Breast epithelium (tissue), 4 donors: ENCODE measurements at regions of chr12 and their contacts with region 1.

Region 1: GRCh38 chr12:94459728-94460615 is at the start of gene CEP83:
- DNase-seq: peak; percentile 90 to 95
- H3K4me3 ChIP-seq: peak within 1 kb of the TSS; percentile 77 to 86 (median 85)
- H3K27ac ChIP-seq: peak within 1 kb of the TSS; percentile 89 to 96
- H3K4me1 ChIP-seq: no peaks in the 10 kb centered on the region
- H3K27me3 ChIP-seq: no peaks in the 10 kb centered on the region
- CTCF ChIP-seq: no peak
- POLR2A ChIP-seq: peak; percentile 47
- total RNA-seq, gene CEP83: 13.3 to 30.0 (median 23.3) TPM

Region 2: DNA sequence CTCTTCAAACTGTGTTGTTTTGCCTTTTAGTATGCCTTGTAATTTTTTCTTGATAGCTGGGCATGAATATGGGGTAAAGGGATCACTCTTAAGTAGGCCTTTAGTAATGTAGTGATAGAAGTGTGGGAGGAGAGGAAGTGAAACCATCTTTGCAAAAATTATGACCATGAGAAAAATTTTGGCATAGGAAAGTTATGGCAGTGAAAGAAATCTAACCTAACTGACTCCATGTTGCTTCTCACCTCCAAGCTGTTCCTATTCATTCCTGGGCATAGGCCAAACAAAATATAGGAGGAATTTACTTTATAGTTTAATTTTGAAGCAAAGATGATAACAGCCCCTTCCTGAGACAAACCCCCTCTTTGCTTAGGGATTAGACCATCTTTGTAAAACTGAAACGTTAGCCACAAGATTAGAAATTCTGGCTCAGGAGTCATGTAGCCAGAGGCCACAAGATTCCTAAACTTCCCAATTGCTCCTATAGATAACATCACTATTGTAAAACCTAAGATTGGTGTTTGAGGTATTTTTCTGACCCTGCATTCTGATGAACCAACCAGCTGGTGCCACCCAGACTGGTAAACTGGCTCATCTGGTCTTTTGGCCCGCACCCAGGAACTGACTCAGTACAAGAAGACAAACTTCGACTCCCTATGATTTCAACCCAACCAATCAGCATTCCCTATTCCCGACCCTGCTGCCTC is 737.0 kb before region 1 on chr12:
- intact Hi-C with region 1: no loop called
- DNase-seq: no peak
- H3K4me3 ChIP-seq: no peak overlapping the region
- H3K27ac ChIP-seq: no peak overlapping the region
- H3K4me1 ChIP-seq: no peaks in the 10 kb centered on the region
- H3K27me3 ChIP-seq: no peaks in the 10 kb centered on the region
- CTCF ChIP-seq: no peak
- POLR2A ChIP-seq: no peak

Region 3: DNA sequence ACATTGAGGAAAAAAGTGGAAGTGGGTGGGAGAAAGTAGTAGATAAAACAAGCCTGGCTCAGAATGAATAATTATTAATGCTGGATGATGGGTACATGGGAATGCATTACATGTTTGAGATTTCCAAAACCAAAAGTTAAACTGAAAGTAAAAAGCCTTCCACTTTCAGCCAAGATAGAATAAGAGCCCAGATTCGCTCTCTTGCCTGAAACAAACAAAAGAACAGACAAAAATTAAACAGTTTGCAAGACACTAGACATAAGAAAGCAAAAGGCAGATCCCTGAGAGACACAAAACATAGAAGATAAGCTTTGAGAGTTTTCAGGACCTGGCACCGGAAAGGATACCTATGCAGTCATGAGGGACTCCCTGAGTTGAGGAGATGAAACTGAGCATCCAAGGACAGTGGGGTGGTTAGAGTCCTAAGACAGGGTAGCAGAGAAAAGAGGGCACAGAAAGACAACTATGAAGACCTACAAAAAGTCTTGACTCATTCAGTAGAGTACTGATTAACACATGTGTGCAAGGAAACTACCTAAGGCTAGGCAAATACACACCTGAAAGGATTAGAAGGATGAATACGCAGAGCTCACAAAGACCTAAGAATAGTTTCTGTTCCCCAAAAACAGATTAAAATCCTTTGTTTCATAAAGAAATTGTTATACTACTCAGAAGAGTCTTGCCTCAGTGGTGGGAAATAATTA is 54.4 kb before region 1 on chr12:
- intact Hi-C with region 1: loop called (anchors 2 kb)
- DNase-seq: no peak
- H3K4me3 ChIP-seq: peak overlapping the region; percentile 21 to 29 (median 27)
- H3K27ac ChIP-seq: peak overlapping the region; percentile 21 to 29
- H3K4me1 ChIP-seq: no peaks in the 10 kb centered on the region
- H3K27me3 ChIP-seq: no peaks in the 10 kb centered on the region
- CTCF ChIP-seq: no peak
- POLR2A ChIP-seq: no peak